Endothelial cell of umbilical vein (primary cell): ENCODE measurements at regions of chr13 and their contacts with region 1.

Region 1: GRCh38 chr13:99980201-99980823 is 1.3 kb upstream of the ZIC2 start:
- DNase-seq: peak; percentile 47
- H3K4me3 ChIP-seq: peak overlapping the region in 1 of 3 experiments; percentile 34
- H3K27ac ChIP-seq: no peak overlapping the region
- H3K4me1 ChIP-seq: peaks cover 5% of the 10 kb centered on the region
- H3K27me3 ChIP-seq: peaks cover 71 to 92% of the 10 kb centered on the region in 2 experiments
- CTCF ChIP-seq: no peak
- POLR2A ChIP-seq: no peak

Region 2: GRCh38 chr13:99969919-99970621 is 10.2 kb before region 1 on chr13:
- CTCF ChIA-PET with region 1: interaction called, 4 read pairs
- POLR2A ChIA-PET with region 1: no interaction called
- dilution Hi-C with region 1: no loop called
- intact Hi-C with region 1: loop called (anchors 1 kb)
- DNase-seq: no peak
- H3K4me3 ChIP-seq: no peak overlapping the region
- H3K27ac ChIP-seq: no peak overlapping the region
- H3K4me1 ChIP-seq: no peaks in the 10 kb centered on the region
- H3K27me3 ChIP-seq: peaks cover 79 to 94% of the 10 kb centered on the region in 2 experiments
- CTCF ChIP-seq: no peak
- POLR2A ChIP-seq: no peak

Region 3: DNA sequence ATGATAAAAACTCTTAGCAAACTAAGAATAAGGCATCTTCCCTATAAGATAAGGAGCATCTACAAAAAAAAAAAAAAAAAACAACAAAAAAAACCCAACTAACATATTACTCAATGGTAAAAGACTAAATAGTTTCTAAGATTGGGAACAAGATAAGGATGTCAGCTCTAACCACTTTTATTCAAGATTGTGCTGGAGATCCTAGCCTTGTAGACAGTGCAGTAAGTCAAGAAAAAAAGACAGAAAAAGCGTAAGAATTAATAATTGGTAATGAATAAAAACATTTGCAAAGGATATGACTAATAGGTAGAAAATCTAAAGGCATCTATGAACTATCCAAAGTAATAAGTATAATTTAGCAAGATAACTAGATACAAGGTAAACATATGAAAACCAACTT is 34.3 kb after region 1 on chr13:
- CTCF ChIA-PET with region 1: no interaction called
- POLR2A ChIA-PET with region 1: no interaction called
- dilution Hi-C with region 1: no loop called
- intact Hi-C with region 1: no loop called
- DNase-seq: no peak
- H3K4me3 ChIP-seq: no peak overlapping the region
- H3K27ac ChIP-seq: no peak overlapping the region
- H3K4me1 ChIP-seq: no peaks in the 10 kb centered on the region
- H3K27me3 ChIP-seq: no peaks in the 10 kb centered on the region
- CTCF ChIP-seq: no peak
- POLR2A ChIP-seq: no peak